ENCODE measurements at regions of chr7 and their contacts with region 1.

Region 1: DNA sequence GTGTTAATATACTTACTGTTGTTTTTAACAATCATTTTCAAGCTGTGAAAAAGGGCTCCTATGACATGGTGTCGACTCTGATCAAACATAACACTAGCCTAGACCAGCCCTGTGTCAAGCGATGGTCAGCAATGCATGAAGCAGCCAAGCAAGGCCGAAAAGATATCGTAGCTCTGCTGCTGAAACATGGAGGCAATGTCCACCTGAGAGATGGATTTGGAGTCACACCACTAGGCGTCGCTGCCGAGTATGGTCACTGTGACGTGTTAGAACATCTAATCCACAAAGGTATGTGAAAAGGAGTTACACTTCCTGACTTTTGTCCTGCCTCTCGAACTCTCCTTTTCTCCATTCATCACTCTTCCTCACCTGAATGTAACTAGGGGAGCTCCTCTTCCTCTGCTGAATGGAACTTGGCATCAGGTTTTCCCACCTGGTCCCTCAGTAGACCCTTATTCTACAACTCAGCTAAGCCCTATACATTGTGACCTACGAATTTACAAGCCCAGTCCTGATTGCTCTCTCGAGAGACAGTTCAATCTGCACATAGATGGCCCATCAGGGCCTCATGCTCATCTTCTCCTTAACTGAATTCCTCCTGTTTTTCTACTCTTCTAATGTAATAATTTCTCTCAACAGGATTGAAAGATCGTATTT is 23.0 kb downstream of the ASB15 start:
- H3K4me3 ChIP-seq: no peak overlapping the region
- H3K27ac ChIP-seq: no peak overlapping the region
- H3K4me1 ChIP-seq: 0 out of 2 replicates have a peak, but pooled peaks cover 4% of the 10 kb centered on the region
- CTCF ChIP-seq: peak; percentile 26; the same call in 1 of the 2 replicates

Region 2: GRCh38 chr7:123553159-123553558 is 71.5 kb before region 1 on chr7:
- CTCF ChIA-PET with region 1: no interaction called
- POLR2A ChIA-PET with region 1: no interaction called
- H3K4me3 ChIP-seq: no peak overlapping the region
- H3K27ac ChIP-seq: no peak overlapping the region
- H3K4me1 ChIP-seq: no peaks in the 10 kb centered on the region
- CTCF ChIP-seq: no peak

Region 3: DNA sequence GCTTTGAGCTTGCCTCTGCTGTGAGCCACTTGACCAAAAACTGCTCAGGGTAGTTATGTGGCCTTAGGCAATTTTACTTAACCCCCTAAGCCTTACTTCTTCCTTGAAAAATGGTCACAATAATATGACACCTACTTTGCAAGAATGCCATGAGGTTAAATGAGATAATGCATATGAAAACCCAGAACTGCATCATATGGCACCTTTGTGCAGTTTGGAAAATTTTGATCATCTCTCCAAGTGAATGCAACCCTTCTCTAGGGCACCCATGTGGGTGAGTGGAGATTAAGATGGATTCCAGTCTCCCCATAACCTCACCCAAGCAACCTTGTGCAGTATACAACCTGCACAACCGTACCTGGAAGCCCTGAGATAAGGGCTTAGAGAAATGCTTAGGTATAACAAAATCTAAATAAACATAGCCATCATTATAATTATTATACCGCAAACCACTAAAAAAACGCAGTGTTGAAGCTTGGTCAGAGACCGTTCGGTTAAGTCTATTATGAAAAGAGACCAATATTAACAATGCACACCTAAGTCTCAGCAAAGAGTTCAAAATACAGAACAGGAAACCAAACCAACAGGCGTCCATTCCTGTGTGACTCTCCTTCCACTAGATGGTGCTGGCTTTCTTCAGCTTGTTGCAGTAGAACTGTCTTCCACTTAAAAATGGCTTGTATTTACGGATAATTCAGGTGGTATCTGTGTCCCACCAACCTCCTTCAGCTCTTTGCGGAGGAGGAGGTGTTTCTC is 44.1 kb before region 1 on chr7:
- CTCF ChIA-PET with region 1: interaction called, 11 read pairs
- POLR2A ChIA-PET with region 1: no interaction called
- H3K4me3 ChIP-seq: no peak overlapping the region
- H3K27ac ChIP-seq: no peak overlapping the region
- H3K4me1 ChIP-seq: no peaks in the 10 kb centered on the region
- CTCF ChIP-seq: peak; percentile 77

Region 4: DNA sequence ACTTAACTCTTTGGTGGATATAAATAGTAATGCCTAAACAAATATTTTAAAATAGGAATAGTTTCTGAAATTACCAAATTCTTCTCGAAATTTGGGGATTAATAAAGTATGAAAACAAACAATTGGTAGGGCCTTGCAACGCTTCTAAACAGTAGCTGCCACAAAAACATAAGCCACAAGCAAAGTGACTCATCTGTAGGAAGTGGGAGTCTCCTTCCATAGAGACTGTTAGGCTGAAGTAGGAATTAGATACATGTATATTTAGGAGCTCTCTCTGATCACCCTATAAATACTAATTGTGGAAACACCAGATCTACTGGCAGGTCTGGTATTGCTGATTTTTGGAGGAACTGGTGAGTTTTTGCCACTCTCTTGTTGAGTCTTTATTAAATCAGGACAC is 25.3 kb after region 1 on chr7:
- CTCF ChIA-PET with region 1: no interaction called
- POLR2A ChIA-PET with region 1: no interaction called
- H3K4me3 ChIP-seq: no peak overlapping the region
- H3K27ac ChIP-seq: no peak overlapping the region
- H3K4me1 ChIP-seq: no peaks in the 10 kb centered on the region
- CTCF ChIP-seq: no peak

Measured in HEK293 (cell line).